CD8-positive, alpha-beta T cell (primary cell): ENCODE measurements at regions of chr19 and their contacts with region 1.

Region 1: GRCh38 chr19:52601025-52601973 is 31.2 kb downstream of the ZNF701 start:
- DNase-seq: peak; percentile 86 to 96 (median 93)
- ATAC-seq: peak; percentile 99
- H3K4me3 ChIP-seq: peak overlapping the region; percentile 96 to 98
- H3K4me3 Mint-ChIP-seq: peak overlapping the region; percentile 97
- H3K27ac ChIP-seq: peak overlapping the region; percentile 71
- H3K27ac Mint-ChIP-seq: peak overlapping the region; percentile 90
- H3K4me1 ChIP-seq: peaks cover 13% of the 10 kb centered on the region
- H3K4me1 Mint-ChIP-seq: peaks cover 44% of the 10 kb centered on the region
- H3K27me3 ChIP-seq: no peaks in the 10 kb centered on the region
- H3K27me3 Mint-ChIP-seq: no peaks in the 10 kb centered on the region
- CTCF ChIP-seq: peak; percentile 49

Region 2: GRCh38 chr19:52336117-52336790 is 265.0 kb before region 1 on chr19 and contains the start of gene ZNF610:
- CTCF ChIA-PET with region 1: no interaction called
- POLR2A ChIA-PET with region 1: no interaction called
- intact Hi-C with region 1: no loop called
- DNase-seq: peak; percentile 71 to 91 (median 84)
- ATAC-seq: peak; percentile 96
- H3K4me3 ChIP-seq: peak within 1 kb of the TSS; percentile 70 to 87
- H3K4me3 Mint-ChIP-seq: peak within 1 kb of the TSS; percentile 98
- H3K27ac ChIP-seq: peak within 1 kb of the TSS; percentile 80 to 85
- H3K27ac Mint-ChIP-seq: peak within 1 kb of the TSS; percentile 99
- H3K4me1 ChIP-seq: peaks cover 6% of the 10 kb centered on the region
- H3K4me1 Mint-ChIP-seq: peaks cover 14% of the 10 kb centered on the region
- H3K27me3 ChIP-seq: no peaks in the 10 kb centered on the region
- H3K27me3 Mint-ChIP-seq: no peaks in the 10 kb centered on the region
- CTCF ChIP-seq: no peak
- total RNA-seq, gene ZNF610: 0.33 TPM

Region 3: DNA sequence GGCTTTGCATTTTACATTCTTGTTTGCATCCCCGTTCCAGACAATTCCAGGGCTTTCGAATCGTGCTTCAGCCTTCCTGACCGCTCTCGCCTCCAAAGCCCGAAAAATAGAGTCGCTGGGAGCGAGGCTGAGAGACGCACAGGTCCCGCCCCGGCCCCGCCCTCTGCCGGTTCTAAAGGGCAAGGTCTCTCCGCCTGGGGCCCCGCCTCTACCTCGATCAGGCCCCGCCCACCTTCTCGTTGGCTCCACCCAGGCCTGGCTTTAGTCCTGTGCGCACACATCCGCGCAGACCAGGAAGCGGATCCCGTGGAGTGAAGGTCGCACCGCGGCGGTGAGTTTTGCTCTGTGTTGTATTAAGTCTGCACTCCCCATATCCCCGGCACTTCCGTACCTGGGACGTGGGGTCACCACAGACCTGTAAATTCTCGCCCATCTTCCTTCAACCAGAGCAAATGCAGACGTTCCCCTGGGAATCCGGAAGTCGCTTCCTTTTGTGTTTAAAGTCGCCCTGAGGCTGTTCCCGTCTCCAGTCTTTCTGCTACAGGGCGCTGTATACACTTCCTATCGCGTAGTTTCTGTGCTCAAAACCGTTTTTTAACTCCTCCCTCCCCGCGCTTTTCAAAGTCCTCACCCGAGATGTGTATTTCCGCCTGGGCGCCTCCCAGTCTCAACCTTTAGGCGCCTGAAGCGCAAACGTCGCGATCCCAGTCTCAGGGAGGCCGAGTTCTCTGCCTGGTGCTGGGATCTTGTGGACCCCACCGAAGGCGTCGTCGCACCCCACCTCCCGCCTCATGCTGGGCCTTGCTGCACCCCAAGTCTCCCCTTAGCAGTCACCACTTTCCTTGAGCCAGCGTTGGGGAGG is 31.1 kb before region 1 on chr19 and contains the start of gene ZNF701:
- CTCF ChIA-PET with region 1: no interaction called
- POLR2A ChIA-PET with region 1: no interaction called
- intact Hi-C with region 1: loop called (anchors 1 kb)
- DNase-seq: peak; percentile 93 to 97 (median 95)
- ATAC-seq: peak; percentile 98
- H3K4me3 ChIP-seq: peak within 1 kb of the TSS; percentile 81 to 96
- H3K4me3 Mint-ChIP-seq: peak within 1 kb of the TSS; percentile 90
- H3K27ac ChIP-seq: peak within 1 kb of the TSS; percentile 77 to 91
- H3K27ac Mint-ChIP-seq: peak within 1 kb of the TSS; percentile 93
- H3K4me1 ChIP-seq: peaks cover 12% of the 10 kb centered on the region
- H3K4me1 Mint-ChIP-seq: peaks cover 42% of the 10 kb centered on the region
- H3K27me3 ChIP-seq: no peaks in the 10 kb centered on the region
- H3K27me3 Mint-ChIP-seq: no peaks in the 10 kb centered on the region
- CTCF ChIP-seq: peak; percentile 30
- total RNA-seq, gene ZNF701: 11.2 to 11.9 TPM

Region 4: DNA sequence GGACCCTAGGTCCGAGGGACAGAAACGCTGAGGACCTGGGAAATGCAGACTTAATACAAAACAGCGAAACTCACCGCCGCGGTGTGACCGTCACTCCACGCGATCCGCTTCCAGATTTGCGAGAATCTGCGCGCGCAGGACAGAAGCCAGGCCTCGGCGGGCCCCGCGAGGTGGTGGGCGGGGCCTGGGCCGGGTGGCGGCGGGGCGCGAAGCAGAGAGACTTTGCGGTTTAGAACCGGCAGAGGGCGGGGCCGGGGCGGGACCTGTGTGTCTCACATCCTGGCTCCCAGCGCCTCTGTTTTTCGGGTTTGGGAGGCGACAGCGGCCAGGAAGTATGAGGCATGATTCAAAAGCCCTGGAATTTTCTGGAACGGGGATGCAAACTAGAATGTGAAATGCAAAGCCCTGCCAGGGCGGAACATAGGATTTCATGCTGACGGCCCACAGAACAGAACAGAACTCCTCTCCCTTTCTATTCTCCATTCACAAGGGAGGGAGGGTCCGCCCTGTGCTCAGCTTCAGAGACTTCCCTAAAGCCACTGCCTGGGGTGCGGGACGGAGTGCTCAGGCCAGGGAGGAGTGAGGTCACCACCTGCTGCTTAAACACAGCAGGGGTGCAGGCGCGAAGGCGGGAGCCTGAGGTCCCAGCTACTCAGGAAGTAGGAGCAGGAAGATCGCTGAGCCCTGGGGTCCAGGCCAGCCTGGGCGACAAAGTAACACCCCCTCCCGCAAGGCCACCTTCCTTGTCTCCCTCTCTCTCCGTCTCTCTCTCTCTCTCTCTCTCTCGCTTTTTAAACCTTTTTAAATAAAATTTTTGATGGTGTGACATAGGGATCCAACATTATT is 89.3 kb after region 1 on chr19:
- CTCF ChIA-PET with region 1: no interaction called
- POLR2A ChIA-PET with region 1: no interaction called
- intact Hi-C with region 1: loop called in 1 of 2 experiments (anchors 1 kb)
- DNase-seq: peak; percentile 75 to 94 (median 93)
- ATAC-seq: peak; percentile 97
- H3K4me3 ChIP-seq: peak overlapping the region; percentile 84 to 94
- H3K4me3 Mint-ChIP-seq: peak overlapping the region; percentile 92
- H3K27ac ChIP-seq: peak overlapping the region; percentile 58 to 87
- H3K27ac Mint-ChIP-seq: peak overlapping the region; percentile 95
- H3K4me1 ChIP-seq: peaks cover 16% of the 10 kb centered on the region
- H3K4me1 Mint-ChIP-seq: peaks cover 31% of the 10 kb centered on the region
- H3K27me3 ChIP-seq: no peaks in the 10 kb centered on the region
- H3K27me3 Mint-ChIP-seq: no peaks in the 10 kb centered on the region
- CTCF ChIP-seq: no peak